Posterior vena cava (tissue), 2 donors: ENCODE measurements at regions of chr14 and their contacts with region 1.

Region 1: GRCh38 chr14:94571950-94572349 is 9.3 kb upstream of the SERPINA5 start:
- DNase-seq: peak; percentile 50

Region 2: DNA sequence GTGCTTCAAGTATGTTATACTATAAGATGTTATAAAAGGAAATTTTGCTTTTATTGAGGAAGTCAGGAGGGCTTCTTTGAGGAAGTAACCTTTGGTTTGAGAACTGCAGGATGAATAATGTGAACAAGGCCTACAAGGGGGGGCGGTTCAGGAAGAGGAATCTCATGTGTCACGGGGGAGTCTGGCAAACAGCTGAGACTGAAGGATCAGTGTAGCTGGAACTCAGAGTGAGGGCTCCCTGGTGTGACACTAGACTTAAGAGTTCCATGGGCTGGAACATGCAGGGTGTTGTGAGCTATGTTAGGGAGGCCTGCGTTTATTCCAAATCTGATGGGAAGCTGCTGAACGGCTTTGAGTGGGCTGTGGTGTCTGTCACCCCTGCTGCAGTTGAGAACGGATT is 1078.9 kb before region 1 on chr14:
- intact Hi-C with region 1: loop called in 1 of 2 experiments (anchors 5 kb)
- DNase-seq: no peak

Region 3: DNA sequence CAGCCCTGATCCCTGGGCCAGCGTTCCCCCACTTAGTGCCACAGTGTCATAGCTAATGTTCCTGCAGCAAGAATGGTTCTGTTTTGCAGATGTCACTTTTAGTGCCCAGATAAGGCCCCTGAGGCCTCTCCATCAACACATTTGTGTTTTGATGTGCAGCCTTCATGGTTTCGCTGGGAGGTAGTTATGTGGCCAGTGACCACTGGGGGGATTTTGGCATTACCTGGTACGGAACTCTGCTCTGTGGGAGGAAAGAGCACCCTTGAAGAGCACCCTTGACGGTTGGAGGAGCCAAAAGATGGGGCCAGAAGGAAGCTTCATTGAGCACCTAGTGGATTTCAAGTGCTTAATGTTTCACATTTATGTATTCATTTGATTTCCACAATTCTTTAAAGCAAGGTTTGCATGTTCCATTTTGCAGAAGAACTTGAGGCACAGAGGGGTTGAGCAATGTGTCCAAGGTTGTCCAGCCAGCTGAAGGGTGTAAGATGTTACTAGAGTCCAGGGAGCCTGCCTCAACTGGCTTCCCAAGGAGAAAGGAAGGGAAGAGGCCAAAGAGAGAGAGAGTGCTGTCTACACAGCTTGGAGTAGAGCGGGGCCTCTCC is 132.4 kb before region 1 on chr14:
- intact Hi-C with region 1: no loop called
- DNase-seq: no peak

Region 4: DNA sequence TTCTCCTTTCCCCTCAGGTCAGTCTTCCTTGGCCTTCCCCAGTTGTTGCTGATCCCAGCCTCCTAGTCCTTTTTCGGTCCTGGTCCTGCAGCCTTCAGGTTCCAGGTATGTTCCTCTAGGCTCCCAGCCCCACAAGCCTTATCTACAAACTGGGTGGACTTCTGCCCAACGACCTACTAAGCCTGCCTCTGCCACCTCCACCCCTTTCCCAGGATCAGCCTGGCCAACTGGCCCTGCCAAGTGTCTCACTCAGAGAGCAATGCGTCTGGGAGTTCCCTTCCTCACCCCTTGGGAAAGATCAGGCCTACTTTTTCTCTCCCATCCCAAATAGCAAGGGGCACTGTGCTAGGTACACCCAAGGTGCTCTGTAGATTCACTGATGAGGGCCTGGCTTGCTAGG is 62.6 kb before region 1 on chr14 and contains the start of gene SERPINA12:
- intact Hi-C with region 1: loop called in 1 of 2 experiments (anchors 2 kb)
- DNase-seq: no peak
- total RNA-seq, gene SERPINA12: not detected